ENCODE measurements at regions of chr2 and their contacts with region 1.

Region 1: DNA sequence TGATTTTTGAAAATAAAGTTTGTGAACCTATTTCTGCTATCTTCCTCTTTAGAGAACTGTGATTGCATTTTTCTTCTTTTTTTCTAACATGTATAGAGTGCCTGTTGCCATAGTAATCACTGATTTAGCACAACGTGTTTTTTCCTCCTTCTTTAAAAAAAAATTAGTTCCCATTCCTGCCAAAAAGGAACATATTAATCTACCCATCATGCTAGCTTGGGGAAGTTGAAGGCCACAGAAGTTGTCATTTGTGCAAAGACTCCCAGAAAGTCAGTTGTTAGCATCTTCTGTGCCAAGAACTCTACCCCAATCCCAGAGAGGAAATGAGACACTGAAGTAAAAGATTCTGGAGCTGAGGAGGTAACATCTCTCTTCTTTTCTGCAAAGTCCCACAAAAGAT is 57.3 kb downstream of the SLC8A1 start:
- DNase-seq: no peak
- ATAC-seq: peak; percentile 69
- H3K4me3 ChIP-seq: no peak overlapping the region
- H3K27ac ChIP-seq: no peak overlapping the region
- H3K4me1 ChIP-seq: peaks cover 0 to 3% of the 10 kb centered on the region in 2 donors
- H3K27me3 ChIP-seq: no peaks in the 10 kb centered on the region

Region 2: DNA sequence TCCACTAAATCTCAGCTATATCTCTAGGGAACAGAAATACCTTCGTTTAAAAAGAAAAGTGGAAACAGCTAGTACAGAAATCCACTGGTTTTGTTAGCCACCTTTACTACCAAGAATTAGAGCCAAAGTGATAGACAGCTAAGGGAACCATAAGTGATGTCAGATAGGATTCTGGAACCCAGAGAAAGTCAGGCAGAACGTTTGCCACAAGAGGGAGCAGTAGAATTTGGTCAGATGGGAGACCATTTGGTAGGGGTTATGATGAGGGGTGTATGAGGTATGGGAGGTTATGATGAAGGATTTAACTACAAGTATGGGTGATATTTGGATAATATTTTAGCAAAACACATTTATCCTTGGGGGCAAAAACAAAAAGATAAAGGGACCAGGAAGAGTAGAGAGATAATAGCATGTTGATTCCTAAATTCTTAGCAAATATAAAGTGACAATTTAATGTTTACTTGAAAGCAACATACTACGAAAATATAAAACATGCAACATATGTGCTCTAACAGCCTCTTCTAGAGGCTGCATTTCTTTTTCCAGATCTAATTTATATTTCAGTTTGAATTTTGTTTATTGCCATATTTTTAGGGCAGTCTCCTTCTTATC is 54.0 kb after region 1 on chr2:
- intact Hi-C with region 1: loop called in 1 of 2 experiments (anchors 10 kb)
- DNase-seq: no peak
- ATAC-seq: no peak
- H3K4me3 ChIP-seq: no peak overlapping the region
- H3K27ac ChIP-seq: no peak overlapping the region
- H3K4me1 ChIP-seq: no peaks in the 10 kb centered on the region
- H3K27me3 ChIP-seq: no peaks in the 10 kb centered on the region